ENCODE measurements at regions of chr10 and their contacts with region 1.

Region 1: DNA sequence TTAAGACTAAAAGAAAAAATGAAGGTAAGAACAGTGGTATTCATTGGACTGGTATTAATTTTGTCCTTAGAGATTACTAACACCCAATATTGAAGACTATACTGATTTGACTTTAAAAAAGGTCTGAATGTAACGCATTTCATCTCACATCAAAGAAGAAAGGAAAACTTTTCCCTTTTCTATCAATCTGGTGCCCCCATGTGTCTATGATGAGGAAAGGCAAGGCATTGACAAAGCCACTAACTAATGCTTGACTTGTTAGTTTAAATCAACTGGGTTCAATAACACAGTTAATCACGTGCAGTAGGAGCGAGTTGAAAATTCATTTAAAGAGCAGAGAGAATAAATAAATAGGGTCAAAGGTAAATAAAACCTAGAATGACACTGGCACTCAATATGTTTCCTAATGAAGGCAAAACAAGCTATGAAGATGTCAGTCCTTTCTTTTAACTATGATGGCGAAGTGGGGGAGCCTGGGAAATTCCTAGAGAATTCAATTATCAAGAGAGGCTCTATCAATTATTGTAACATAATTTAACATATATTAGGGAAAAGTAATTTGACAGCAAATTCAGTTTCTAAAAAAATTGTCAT is 180.9 kb downstream of the ANK3 start:
- DNase-seq: peak; percentile 31

Region 2: DNA sequence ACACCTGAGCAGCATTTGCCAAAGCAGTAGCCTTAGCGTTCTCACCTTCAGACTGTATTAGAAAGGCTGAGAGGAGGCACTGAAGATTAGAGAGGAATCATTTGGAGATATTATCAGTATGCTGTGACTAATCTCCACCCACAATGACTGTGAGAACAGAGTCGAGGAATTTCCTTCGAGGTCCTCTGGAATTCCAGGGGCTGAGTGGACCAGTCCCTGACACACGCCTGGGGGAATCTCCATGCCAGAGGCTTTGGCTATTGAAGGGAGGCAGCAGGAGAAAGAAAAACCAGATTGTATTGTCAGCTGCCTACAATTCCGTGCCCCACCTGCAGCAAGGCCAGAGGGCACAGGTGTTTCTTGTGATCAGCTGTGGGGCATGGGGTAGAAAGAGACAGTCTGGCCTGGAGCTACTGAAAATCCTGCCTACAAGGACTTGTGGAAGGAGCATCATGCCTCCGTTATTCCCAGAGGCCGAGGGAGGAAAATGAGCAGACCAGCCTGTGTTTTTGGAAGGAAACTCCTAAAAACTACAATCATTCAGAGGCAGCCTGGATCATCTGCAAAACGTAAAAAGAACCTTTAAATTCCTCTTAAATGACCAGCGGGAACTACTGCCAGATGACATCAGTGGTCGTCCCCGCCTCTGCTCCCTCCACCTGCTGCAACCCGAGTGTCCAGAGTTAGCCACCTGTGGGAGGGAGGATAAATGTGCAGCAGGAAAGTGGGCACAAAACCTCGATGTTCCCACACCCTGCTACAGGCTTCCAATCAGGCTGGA is 206.2 kb after region 1 on chr10:
- in situ Hi-C with region 1: loop called (anchors 25 kb)
- DNase-seq: no peak

Region 3: GRCh38 chr10:61284222-61284890 is 1075.6 kb after region 1 on chr10:
- in situ Hi-C with region 1: no loop called
- DNase-seq: peak; percentile 64

Measured in KBM-7 (cell line).